ENCODE measurements at regions of chr2 and their contacts with region 1.

Region 1: GRCh38 chr2:47205576-47206141 is 50.6 kb upstream of the STPG4 start:
- DNase-seq: no peak
- H3K4me3 ChIP-seq: no peak overlapping the region
- H3K27ac ChIP-seq: no peak overlapping the region
- H3K4me1 ChIP-seq: peaks cover 5% of the 10 kb centered on the region
- H3K27me3 ChIP-seq: no peaks in the 10 kb centered on the region
- CTCF ChIP-seq: no peak

Region 2: GRCh38 chr2:47269316-47270232 is 63.9 kb after region 1 on chr2:
- CTCF ChIA-PET with region 1: no interaction called
- POLR2A ChIA-PET with region 1: interaction called, 11 read pairs
- intact Hi-C with region 1: no loop called
- DNase-seq: peak; percentile 69
- H3K4me3 ChIP-seq: no peak overlapping the region
- H3K27ac ChIP-seq: no peak overlapping the region
- H3K4me1 ChIP-seq: peaks cover 26% of the 10 kb centered on the region
- H3K27me3 ChIP-seq: no peaks in the 10 kb centered on the region
- CTCF ChIP-seq: no peak